Testis (tissue), 5 donors: ENCODE measurements at regions of chr3 and their contacts with region 1.

Region 1: GRCh38 chr3:182683453-182683852 is 109.9 kb upstream of the ATP11B start:
- DNase-seq: peak; percentile 81
- H3K4me3 ChIP-seq: peak overlapping the region in 1 of 2 donors; percentile 55
- H3K27ac ChIP-seq: no peak overlapping the region
- H3K4me1 ChIP-seq: no peaks in the 10 kb centered on the region
- H3K27me3 ChIP-seq: no peaks in the 10 kb centered on the region
- CTCF ChIP-seq: peak; percentile 53 to 88 (median 82)
- POLR2A ChIP-seq: no peak

Region 2: GRCh38 chr3:181709537-181710279 is 973.7 kb before region 1 on chr3:
- intact Hi-C with region 1: loop called (anchors 10 kb)
- DNase-seq: peak; percentile 92
- H3K4me3 ChIP-seq: no peak overlapping the region
- H3K27ac ChIP-seq: no peak overlapping the region
- H3K4me1 ChIP-seq: peaks cover 8% of the 10 kb centered on the region
- H3K27me3 ChIP-seq: peaks cover 4% of the 10 kb centered on the region
- CTCF ChIP-seq: peak; percentile 68 to 93 (median 80)
- POLR2A ChIP-seq: no peak

Region 3: GRCh38 chr3:182405759-182406158 is 277.7 kb before region 1 on chr3:
- intact Hi-C with region 1: no loop called
- DNase-seq: no peak
- H3K4me3 ChIP-seq: no peak overlapping the region
- H3K27ac ChIP-seq: no peak overlapping the region
- H3K4me1 ChIP-seq: no peaks in the 10 kb centered on the region
- H3K27me3 ChIP-seq: no peaks in the 10 kb centered on the region
- CTCF ChIP-seq: no peak
- POLR2A ChIP-seq: no peak